K562 (cell line): ENCODE measurements at regions of chr3 and their contacts with region 1.

Region 1: DNA sequence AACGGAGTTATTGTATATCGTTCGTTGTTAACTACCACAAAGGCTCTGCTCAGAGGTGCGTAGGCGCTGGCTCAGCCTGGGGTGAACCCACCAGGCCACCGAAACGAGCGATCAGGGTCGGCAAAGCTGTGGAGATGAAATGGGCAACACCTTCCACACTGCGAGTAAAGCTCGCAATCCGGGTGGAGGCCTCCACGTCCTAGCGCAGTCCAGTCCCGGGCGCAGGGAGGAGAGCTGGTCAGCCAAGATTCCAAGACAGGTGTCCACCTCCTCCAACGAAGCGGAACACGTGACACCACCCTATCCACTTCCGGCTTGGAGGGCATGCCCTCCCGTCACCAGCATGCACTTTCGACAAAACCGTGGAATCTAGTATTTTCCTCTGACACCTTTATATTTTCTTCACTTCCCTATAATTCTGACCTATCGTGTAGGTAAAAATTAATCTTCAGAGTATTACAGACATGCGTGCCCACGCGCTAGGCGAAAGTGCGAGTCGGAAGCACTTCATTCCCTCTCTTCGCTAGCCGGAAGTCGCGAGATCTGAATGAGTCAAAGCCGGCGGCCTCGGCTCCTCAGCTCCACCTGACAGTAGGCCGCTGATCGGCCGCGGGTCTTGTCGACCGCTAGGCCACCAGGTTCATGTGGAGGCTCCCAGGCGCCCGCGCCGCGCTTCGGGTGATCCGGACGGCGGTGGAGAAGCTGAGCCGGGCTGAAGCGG is at the start of gene PDE12:
- DNase-seq: peak; percentile 65 to 89 (median 70)
- ATAC-seq: peak; percentile 91
- H3K4me3 ChIP-seq: peak within 1 kb of the TSS; percentile 70
- H3K27ac ChIP-seq: peak within 1 kb of the TSS; percentile 99
- H3K4me1 ChIP-seq: peaks cover 10 to 26% of the 10 kb centered on the region in 2 experiments; a peak in 4 of 5 replicates
- H3K27me3 ChIP-seq: no peaks in the 10 kb centered on the region
- CTCF ChIP-seq: no peak
- EP300 ChIP-seq: peak; percentile 98
- POLR2A ChIP-seq: peak; percentile 93
- RAD21 ChIP-seq: no peak
- polyA plus RNA-seq, gene PDE12: 2.1 to 8.0 TPM

Region 2: DNA sequence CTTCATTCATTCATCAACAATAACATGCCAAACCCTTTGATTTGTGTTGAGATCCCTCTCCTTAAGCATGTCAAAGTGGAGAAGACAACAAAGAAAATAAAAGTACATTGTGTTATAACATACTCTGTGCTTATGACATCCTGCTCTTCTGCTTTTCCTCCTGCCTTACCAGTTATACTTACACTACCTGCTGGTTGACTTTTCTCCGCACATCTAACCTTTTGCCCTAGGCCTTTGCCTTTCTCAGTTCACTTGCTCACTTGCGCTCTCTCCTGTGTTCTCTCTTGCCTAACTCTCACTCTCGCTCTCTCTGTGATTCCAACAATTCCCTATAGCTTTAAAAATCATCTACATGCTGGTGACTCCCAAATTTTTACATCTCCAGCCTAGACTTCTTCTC is 17.4 kb before region 1 on chr3:
- CTCF ChIA-PET with region 1: no interaction called
- POLR2A ChIA-PET with region 1: no interaction called
- in situ Hi-C with region 1: no loop called
- intact Hi-C with region 1: no loop called
- DNase-seq: no peak
- ATAC-seq: no peak
- H3K4me3 ChIP-seq: no peak overlapping the region
- H3K27ac ChIP-seq: no peak overlapping the region
- H3K4me1 ChIP-seq: no peaks in the 10 kb centered on the region
- H3K27me3 ChIP-seq: 0 out of 5 replicates have a peak, but pooled peaks cover 0 to 7% of the 10 kb centered on the region in 2 experiments
- CTCF ChIP-seq: no peak
- EP300 ChIP-seq: no peak
- POLR2A ChIP-seq: no peak
- RAD21 ChIP-seq: no peak

Region 3: DNA sequence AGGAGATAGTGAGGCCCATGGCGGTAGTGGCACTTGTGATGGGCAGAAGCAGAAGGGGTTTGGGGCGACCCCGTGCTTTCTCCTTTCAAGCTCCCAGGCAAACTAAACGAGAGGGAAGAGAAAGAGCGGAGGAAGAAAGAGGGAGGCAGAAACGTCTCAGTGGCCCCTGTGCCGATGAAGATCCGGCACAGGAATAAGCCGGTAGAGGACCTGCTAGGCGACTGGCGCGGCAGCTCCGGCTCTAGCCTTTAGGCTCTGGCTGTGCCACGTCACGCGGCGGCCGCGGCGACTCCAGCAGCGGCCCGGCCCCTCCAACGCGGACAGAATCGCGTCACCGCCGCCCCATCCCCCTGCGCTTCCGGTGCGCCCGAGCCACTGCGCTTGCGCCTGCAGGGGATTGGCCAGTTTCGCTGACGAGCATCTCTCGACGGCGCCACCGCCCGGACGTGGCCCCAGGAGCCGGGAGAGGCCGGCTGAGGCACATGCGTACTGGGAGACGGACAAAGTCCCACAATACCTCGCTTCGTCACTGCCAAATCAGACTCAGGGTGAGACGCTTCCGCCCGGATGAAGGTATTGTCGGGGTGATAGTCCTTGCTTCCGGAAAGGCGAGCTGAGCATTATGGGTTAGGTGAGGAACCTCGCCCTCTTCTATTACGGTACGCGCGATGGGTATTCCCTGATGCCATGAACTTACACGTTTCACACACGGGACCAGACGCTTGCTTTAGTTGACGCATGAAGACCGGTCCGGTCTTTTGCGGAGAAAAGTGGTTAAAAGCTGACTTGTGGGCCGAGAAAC is 41.4 kb after region 1 on chr3 and contains the start of gene ARF4:
- CTCF ChIA-PET with region 1: no interaction called
- POLR2A ChIA-PET with region 1: interaction called, 7 read pairs
- in situ Hi-C with region 1: no loop called
- intact Hi-C with region 1: loop called (anchors 2 kb)
- DNase-seq: peak; percentile 93 to 98 (median 94)
- ATAC-seq: peak; percentile 90
- H3K4me3 ChIP-seq: peak within 1 kb of the TSS; percentile 85
- H3K27ac ChIP-seq: peak within 1 kb of the TSS; percentile 97
- H3K4me1 ChIP-seq: peaks cover 15 to 16% of the 10 kb centered on the region in 2 experiments; a peak in 4 of 5 replicates
- H3K27me3 ChIP-seq: no peaks in the 10 kb centered on the region
- CTCF ChIP-seq: peak; percentile 23 to 50 (median 37); a peak in 4 of 6 replicates
- EP300 ChIP-seq: no peak; the same call in none of the 2 replicates
- POLR2A ChIP-seq: peak; percentile 97
- RAD21 ChIP-seq: no peak
- polyA plus RNA-seq, gene ARF4: 226 to 273 TPM

Region 4: GRCh38 chr3:57787867-57788623 is 232.1 kb after region 1 on chr3:
- CTCF ChIA-PET with region 1: no interaction called
- POLR2A ChIA-PET with region 1: no interaction called
- in situ Hi-C with region 1: no loop called
- intact Hi-C with region 1: no loop called
- DNase-seq: peak; percentile 22 to 85 (median 46)
- ATAC-seq: peak; percentile 64
- H3K4me3 ChIP-seq: no peak overlapping the region
- H3K27ac ChIP-seq: peak overlapping the region; percentile 65
- H3K4me1 ChIP-seq: peaks cover 11 to 48% of the 10 kb centered on the region in 2 experiments; a peak in 4 of 5 replicates
- H3K27me3 ChIP-seq: no peaks in the 10 kb centered on the region
- CTCF ChIP-seq: no peak
- EP300 ChIP-seq: peak; percentile 75; the same call in 1 of the 2 replicates
- POLR2A ChIP-seq: no peak
- RAD21 ChIP-seq: 0 out of 4 replicates have a peak, but pooled peaks of 1 of the 2 experiments have one; percentile 7